Heart left ventricle (tissue), 16 donors: ENCODE measurements at regions of chr12 and their contacts with region 1.

Region 1: DNA sequence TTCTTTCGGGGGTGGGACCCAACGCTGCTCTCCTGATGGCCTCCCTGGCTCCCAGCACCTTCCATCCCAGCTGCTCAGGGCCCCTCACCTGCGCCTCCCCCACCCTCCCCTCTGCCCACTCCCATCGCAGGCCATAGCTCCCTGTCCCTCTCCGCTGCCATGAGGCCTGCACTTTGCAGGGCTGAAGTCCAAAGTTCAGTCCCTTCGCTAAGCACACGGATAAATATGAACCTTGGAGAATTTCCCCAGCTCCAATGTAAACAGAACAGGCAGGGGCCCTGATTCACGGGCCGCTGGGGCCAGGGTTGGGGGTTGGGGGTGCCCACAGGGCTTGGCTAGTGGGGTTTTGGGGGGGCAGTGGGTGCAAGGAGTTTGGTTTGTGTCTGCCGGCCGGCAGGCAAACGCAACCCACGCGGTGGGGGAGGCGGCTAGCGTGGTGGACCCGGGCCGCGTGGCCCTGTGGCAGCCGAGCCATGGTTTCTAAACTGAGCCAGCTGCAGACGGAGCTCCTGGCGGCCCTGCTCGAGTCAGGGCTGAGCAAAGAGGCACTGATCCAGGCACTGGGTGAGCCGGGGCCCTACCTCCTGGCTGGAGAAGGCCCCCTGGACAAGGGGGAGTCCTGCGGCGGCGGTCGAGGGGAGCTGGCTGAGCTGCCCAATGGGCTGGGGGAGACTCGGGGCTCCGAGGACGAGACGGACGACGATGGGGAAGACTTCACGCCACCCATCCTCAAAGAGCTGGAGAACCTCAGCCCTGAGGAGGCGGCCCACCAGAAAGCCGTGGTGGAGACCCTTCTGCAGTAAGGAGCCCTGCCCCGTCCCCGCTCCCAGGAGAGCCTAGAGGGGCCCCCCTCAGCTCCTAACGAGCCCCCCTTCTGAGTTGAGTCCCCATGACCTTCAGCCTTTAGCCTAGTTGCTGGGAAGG is at the start of gene HNF1A:
- DNase-seq: no peak
- ATAC-seq: no peak
- H3K4me3 ChIP-seq: no peak within 1 kb of the TSS
- H3K27ac ChIP-seq: peak within 1 kb of the TSS in 1 of 12 donors; percentile 49
- H3K4me1 ChIP-seq: no peaks in the 10 kb centered on the region
- H3K27me3 ChIP-seq: no peaks in the 10 kb centered on the region
- CTCF ChIP-seq: no peak
- POLR2A ChIP-seq: no peak
- total RNA-seq, gene HNF1A: not detected

Region 2: DNA sequence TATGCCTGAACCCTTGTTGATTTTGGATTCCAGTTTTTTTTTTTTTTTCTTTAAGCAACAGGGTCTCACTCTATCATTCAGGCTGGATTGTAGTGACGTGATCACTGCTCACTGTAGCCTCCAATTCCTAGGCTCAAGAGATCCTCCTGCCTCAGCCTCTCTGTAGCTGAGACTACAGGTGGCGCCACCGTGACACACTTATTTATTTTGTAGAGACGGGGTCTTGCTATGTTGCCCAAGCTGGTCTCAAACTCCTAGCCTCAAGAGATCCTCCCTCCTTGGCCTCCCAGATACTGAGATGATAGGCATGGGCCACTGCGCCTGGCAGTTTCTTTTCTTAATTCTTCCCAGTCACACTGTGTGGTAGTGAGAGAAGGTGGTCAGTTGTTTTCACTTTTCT is 227.8 kb before region 1 on chr12:
- intact Hi-C with region 1: loop called in 2 of 10 experiments (anchors 5 to 10 kb)
- DNase-seq: no peak
- ATAC-seq: no peak
- H3K4me3 ChIP-seq: no peak overlapping the region
- H3K27ac ChIP-seq: no peak overlapping the region
- H3K4me1 ChIP-seq: no peaks in the 10 kb centered on the region
- H3K27me3 ChIP-seq: no peaks in the 10 kb centered on the region
- CTCF ChIP-seq: no peak
- POLR2A ChIP-seq: no peak

Region 3: DNA sequence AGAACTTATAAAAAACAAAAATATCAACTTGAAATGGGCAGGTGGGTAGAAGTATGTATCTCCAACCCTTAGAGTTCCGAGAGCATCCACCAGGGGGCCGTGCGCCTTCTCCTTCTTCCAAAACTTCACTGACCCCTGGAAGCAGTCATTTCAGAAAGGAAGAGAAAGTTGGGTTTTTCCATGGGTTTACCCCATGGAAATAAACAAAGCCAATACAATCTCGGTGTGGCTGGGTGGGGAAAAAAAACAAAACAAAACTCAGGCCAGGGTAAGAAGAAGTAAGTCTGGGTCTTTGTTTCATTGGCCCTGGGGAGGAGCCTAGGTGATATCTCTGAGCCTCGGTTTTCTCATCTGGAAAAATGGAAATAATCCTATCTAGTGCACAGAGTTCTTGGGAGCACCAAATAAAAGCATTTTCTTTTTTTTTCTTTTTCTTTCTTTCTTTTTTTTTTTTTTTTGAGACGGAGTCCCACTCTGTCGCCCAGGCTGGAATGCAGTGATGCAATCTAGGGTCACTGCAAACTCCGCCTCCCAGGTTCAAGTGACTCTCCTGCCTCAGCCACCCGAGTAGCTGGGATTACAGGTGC is 33.8 kb before region 1 on chr12:
- intact Hi-C with region 1: no loop called
- DNase-seq: peak; percentile 38 to 63 (median 41)
- ATAC-seq: peak in 2 of 4 donors; percentile 44 to 47
- H3K4me3 ChIP-seq: no peak overlapping the region
- H3K27ac ChIP-seq: no peak overlapping the region
- H3K4me1 ChIP-seq: peaks cover 0 to 4% (median 0%) of the 10 kb centered on the region in 12 donors
- H3K27me3 ChIP-seq: no peaks in the 10 kb centered on the region
- CTCF ChIP-seq: peak; percentile 46 to 75 (median 59)
- POLR2A ChIP-seq: no peak

Region 4: DNA sequence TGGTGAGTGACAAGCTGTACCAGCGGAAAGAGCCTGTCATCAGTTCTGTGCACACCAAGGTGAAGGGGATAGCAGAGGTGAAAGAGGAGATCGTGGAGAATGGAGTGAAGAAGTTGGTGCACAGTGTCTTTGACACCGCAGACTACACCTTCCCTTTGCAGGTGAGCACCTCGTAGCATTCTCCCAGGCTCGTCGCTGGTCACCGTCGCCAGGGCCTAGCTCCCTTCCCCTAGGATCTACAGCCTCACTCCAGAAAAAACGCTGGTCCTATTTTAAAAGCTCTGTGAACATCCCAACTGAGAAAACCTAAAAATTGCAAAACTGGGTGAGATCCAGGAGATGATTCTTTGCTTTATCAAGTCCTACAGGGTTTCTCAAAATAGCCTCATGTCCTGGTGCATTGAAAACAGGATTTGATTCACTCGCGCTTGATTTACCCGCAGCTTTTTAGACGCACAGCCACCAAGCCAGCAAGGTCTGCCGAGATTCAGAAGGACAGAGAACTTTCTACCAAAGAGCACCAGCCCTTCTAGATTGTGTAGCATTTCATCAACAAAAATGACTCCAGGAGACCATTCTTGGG is 176.3 kb after region 1 on chr12:
- intact Hi-C with region 1: no loop called
- DNase-seq: no peak
- ATAC-seq: no peak
- H3K4me3 ChIP-seq: no peak overlapping the region
- H3K27ac ChIP-seq: no peak overlapping the region
- H3K4me1 ChIP-seq: no peaks in the 10 kb centered on the region
- H3K27me3 ChIP-seq: no peaks in the 10 kb centered on the region
- CTCF ChIP-seq: no peak
- POLR2A ChIP-seq: no peak